Activated CD4-positive, alpha-beta memory T cell treated with anti-CD3 and anti-CD28 coated beads, Interleukin-2, amount 10 ng/mL, durations not matched to agents 7 days and 5 days (primary cell): ENCODE measurements at regions of chr11 and their contacts with region 1.

Region 1: GRCh38 chr11:119196833-119197483 is 9.2 kb upstream of the CBL start:
- DNase-seq: peak; percentile 70
- H3K4me3 Mint-ChIP-seq: no peak overlapping the region
- H3K27ac Mint-ChIP-seq: no peak overlapping the region
- H3K4me1 Mint-ChIP-seq: peaks cover 3% of the 10 kb centered on the region
- H3K27me3 Mint-ChIP-seq: peaks cover 6% of the 10 kb centered on the region

Region 2: GRCh38 chr11:119084663-119085436 is 112.1 kb before region 1 on chr11 and contains the start of gene HMBS:
- CTCF ChIA-PET with region 1: interaction called, 13 read pairs
- POLR2A ChIA-PET with region 1: no interaction called
- DNase-seq: peak; percentile 89
- H3K4me3 Mint-ChIP-seq: peak within 1 kb of the TSS; percentile 98
- H3K27ac Mint-ChIP-seq: peak within 1 kb of the TSS; percentile 91
- H3K4me1 Mint-ChIP-seq: peaks cover 47% of the 10 kb centered on the region
- H3K27me3 Mint-ChIP-seq: no peaks in the 10 kb centered on the region
- total RNA-seq, gene HMBS: 17.3 to 18.8 TPM

Region 3: GRCh38 chr11:119168471-119169281 is 28.3 kb before region 1 on chr11 and contains the start of gene NLRX1:
- CTCF ChIA-PET with region 1: interaction called, 30 read pairs
- POLR2A ChIA-PET with region 1: interaction called, 6 read pairs
- DNase-seq: peak; percentile 89
- H3K4me3 Mint-ChIP-seq: peak within 1 kb of the TSS; percentile 89
- H3K27ac Mint-ChIP-seq: peak within 1 kb of the TSS; percentile 89
- H3K4me1 Mint-ChIP-seq: peaks cover 23% of the 10 kb centered on the region
- H3K27me3 Mint-ChIP-seq: no peaks in the 10 kb centered on the region
- total RNA-seq, gene NLRX1: 19.2 to 21.9 TPM